ENCODE measurements at regions of chr1 and their contacts with region 1.

Region 1: DNA sequence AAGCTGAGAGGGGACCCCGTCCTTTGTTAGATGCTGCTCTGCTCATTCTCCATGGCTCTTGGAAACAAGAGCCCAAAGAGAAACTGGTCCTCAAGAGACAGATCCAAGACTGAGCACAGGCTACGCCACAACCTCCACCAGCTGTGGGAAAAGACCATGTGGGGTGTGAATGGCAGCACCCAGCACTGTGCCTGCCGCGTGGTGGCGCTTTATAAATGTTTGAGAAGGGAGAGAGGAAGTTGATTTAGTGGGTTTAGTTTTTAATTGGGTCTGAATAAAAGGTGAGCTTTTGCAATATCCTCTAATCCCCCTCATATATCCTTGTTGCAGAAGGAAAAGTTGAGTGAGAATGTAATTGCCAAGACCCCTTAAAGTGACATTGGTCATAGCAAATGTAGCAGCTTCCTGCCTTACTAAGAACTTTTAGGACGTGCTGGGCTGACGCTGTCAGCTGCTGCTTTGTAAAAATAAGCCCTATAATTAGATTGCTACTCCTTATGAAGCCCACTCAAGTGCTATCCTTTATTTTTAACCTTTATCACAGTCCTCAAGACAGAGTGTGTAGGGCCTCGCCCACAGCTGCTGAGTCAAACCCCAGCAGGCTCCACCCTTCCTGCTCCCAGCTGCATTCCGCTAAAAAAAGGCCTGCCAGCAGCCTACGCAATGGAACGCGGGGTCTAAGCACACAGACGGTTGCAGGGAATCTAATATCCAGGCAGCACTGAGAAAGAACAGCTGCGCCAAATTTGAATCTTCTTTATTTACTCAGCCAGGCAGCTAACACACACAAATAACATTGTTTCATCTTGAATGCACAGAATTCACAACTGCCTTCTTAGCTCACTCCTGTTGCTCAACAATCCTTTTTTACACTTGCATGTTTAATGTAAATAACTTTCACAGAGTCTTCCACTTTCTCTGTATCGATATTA is 47.4 kb upstream of the PRDX6 start:
- DNase-seq: peak; percentile 42
- H3K4me3 ChIP-seq: no peak overlapping the region
- H3K27ac ChIP-seq: peak overlapping the region; percentile 58 to 70
- H3K4me1 ChIP-seq: peaks cover 14% of the 10 kb centered on the region
- H3K27me3 ChIP-seq: no peaks in the 10 kb centered on the region
- CTCF ChIP-seq: peak in 3 of 4 experiments; percentile 43 to 58 (median 58)
- POLR2A ChIP-seq: no peak

Region 2: GRCh38 chr1:173476664-173477285 is 47.0 kb after region 1 on chr1:
- intact Hi-C with region 1: loop called (anchors 2 kb)
- DNase-seq: peak; percentile 96
- H3K4me3 ChIP-seq: peak overlapping the region; percentile 88 to 97
- H3K27ac ChIP-seq: peak overlapping the region; percentile 99
- H3K4me1 ChIP-seq: peaks cover 11% of the 10 kb centered on the region
- H3K27me3 ChIP-seq: no peaks in the 10 kb centered on the region
- CTCF ChIP-seq: peak in 2 of 4 experiments; percentile 13 to 24
- POLR2A ChIP-seq: peak; percentile 68

Region 3: DNA sequence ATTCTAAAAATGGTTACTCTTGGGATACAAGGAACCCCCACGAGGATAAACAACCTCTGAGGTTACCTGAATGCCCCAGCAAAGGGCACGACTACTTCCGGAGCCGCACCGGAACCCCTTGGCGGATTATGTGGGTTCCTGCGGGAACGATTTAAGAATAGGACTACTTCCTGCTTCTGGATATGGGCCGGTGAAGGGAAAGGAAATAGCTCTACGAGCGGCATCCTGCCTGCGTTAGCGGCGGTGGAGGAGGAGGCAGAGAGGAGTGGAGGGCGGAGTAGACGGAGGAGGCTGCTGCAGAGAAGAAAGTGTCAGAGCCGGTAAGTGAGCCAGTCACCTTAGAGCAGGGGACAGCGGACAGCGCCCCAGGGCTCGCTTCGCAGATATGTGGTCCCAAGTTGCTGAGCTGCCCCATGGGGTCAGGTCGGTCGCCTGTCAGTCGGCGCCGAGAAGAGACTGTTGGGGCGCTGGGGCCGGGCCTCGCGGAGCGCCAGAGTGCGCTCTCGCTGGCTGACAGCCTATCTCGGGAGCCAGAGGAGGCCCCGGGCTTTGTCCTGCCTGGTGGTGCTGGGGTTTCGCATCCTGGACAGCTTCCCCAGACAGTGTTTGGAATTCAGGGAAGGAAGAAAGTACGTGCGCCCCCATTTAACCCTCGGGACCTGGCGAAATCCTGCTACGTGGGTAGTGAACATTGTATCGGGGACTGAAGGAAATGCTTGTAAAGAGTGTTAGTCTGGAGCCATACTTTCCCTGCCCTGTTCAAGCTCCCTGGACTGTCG is 285.2 kb after region 1 on chr1 and contains the start of gene KLHL20:
- intact Hi-C with region 1: loop called (anchors 10 kb)
- DNase-seq: peak; percentile 71
- H3K4me3 ChIP-seq: peak within 1 kb of the TSS; percentile 79 to 83
- H3K27ac ChIP-seq: peak within 1 kb of the TSS; percentile 83 to 86
- H3K4me1 ChIP-seq: no peaks in the 10 kb centered on the region
- H3K27me3 ChIP-seq: no peaks in the 10 kb centered on the region
- CTCF ChIP-seq: no peak
- POLR2A ChIP-seq: peak; percentile 56
- total RNA-seq, gene KLHL20: 26.3 to 27.6 TPM

Region 4: DNA sequence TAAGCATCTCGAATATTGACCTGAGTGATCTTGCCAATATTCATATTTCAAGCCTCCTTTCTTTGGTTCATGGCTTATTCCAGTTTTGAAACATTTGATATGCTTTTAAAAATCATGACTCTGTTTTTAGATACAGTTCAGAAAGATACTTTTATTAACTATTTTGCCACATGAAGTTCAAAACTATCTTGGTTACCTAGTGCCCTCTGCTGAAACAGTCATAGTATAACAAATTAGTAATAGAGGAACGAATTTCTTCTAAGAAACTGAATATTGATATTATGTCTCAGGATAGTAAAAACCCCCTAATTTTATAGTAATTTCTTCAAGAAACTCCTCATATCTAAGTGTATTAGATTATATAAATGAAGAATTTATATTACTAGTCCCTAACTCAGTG is 645.0 kb after region 1 on chr1:
- intact Hi-C with region 1: loop called (anchors 10 kb)
- DNase-seq: no peak
- H3K4me3 ChIP-seq: no peak overlapping the region
- H3K27ac ChIP-seq: no peak overlapping the region
- H3K4me1 ChIP-seq: no peaks in the 10 kb centered on the region
- H3K27me3 ChIP-seq: no peaks in the 10 kb centered on the region
- CTCF ChIP-seq: peak in 3 of 4 experiments; percentile 20 to 34 (median 33)
- POLR2A ChIP-seq: no peak

Measured in prostate gland (tissue), 2 donors.